ENCODE measurements at regions of chr3 and their contacts with region 1.

Region 1: DNA sequence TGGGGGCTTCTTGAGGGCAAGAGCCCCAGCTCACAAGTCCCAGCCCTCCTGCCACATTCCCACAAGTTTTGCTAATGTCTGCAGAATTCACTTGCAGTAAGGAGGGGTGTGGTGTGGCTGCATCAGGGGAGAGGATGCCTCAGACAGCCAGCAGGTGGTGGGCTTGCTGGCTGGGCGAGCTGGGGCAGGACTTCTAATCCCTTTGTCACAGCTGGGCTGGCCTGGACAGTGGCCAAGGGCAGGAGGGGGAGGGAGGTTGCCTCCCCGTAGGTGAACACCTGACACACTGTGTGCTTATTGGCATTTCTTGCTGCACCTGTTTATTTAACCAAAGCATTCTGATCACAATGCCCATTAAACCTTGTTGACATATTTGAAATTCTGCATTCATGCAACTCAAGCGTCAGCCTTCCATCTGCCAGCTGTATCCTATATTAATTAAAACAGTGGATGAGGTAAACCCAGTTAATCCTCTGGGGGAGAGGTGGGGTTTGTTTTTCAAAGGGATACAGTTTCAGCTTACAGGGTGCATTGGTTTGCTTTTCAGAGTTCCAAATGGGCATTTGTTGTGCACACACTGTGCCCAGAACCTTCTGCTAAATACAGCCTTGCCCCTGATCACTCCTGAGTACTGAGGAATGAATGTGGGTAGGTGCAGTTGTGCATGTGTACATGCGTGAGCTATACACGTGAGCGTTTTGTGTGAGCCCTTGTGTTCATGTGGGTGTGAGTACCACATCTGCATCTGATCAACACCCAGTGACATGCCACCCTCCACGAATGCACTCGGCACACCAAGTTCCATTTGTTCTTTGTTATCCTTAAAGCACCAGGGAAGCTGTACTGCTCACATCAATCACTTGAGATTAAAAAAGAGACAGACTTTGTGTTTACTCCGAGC is 268.7 kb downstream of the XXYLT1 start:
- DNase-seq: peak; percentile 79
- ATAC-seq: peak; percentile 64

Region 2: GRCh38 chr3:194800002-194800401 is 202.2 kb before region 1 on chr3:
- intact Hi-C with region 1: no loop called
- DNase-seq: no peak
- ATAC-seq: no peak

Region 3: GRCh38 chr3:195063581-195064193 is 61.5 kb after region 1 on chr3:
- intact Hi-C with region 1: no loop called
- DNase-seq: no peak
- ATAC-seq: no peak

Region 4: DNA sequence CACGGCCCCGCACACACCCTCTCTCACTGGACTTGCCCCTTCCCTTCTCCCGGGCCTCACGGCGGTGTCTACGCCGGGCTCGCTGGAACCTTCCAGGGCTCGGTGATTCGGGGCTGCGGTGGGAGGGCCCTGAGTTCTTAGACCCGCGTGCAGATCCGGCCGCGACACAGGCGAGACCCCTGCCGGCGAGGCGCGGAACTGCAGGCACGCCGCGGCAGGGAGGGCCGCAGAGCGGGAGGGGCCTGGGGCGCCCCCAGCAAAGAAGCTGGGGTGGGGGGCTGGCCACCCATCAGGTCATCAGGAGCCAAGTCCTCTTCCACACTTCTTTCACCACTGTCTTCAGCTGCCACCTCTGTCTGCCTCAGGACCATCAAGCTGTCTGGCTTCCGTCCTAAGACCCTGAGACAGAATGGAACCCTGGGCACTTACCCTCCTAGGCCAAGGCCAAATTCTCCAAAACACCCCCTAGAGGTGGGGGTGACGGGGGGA is 104.3 kb after region 1 on chr3:
- intact Hi-C with region 1: loop called (anchors 2 kb)
- DNase-seq: peak; percentile 84
- ATAC-seq: peak; percentile 83

Region 5: DNA sequence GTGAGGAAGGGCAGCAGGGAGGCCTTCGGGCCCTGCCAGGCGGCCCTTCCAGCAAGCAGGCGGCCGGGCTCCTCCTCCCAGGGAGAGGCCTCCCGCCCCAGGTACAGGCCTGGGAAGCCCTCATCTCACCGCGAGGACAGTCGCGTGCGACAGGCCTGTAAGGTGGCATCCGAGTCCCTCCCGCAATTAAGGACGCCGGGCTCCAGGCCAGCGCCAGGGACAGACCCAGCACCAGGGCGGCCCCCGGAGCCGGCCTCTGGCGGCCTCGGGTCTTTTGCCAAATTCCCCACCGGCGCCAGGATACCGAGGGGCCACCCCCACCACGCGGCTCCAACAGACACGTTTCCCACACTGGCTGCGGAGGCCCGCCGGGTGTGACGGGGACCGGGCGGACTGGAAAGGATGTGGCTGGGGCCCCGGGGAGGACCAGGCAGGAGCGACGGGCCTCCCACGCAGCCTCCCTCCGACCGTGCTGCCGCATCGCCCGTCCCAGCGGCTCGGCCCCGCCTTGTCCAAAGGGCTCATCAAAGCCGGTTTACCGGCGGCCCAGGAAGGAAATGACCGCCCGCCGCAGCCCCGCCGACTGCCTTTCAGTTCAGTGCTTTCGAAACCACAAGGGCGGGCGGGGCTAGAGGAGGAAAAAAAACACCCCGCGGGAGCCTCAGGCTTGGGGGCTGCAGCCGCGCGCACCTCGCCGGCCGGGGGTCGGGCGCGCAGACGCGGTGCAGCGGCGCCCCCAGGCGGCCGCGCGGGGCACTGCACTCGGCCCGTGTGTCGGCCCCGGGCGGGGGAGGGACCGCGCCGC is 257.5 kb after region 1 on chr3:
- intact Hi-C with region 1: loop called (anchors 2 kb)
- DNase-seq: peak; percentile 93
- ATAC-seq: peak; percentile 91

Region 6: DNA sequence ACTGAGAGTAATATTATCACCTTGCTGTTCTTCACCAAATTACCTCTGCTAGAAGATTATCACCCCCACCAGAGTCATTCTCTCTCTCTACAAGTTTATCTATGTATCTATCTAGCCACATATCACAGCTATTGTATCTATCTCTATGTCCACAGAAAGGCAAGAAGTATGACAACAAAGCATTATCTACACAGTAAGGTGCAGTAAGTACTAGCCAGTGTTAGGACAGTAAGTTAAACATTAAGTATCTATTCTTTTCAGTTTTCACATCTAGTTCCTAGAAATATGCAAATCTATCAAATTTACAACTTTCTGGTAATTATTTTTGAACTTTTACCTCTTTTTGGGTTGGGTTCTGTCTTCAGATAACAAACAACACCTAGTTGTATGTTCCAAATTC is 295.2 kb after region 1 on chr3:
- intact Hi-C with region 1: no loop called
- DNase-seq: no peak
- ATAC-seq: no peak